Activated CD4-positive, alpha-beta memory T cell treated with anti-CD3 and anti-CD28 coated beads for 36 hours (primary cell): ENCODE measurements at regions of chr2 and their contacts with region 1.

Region 1: DNA sequence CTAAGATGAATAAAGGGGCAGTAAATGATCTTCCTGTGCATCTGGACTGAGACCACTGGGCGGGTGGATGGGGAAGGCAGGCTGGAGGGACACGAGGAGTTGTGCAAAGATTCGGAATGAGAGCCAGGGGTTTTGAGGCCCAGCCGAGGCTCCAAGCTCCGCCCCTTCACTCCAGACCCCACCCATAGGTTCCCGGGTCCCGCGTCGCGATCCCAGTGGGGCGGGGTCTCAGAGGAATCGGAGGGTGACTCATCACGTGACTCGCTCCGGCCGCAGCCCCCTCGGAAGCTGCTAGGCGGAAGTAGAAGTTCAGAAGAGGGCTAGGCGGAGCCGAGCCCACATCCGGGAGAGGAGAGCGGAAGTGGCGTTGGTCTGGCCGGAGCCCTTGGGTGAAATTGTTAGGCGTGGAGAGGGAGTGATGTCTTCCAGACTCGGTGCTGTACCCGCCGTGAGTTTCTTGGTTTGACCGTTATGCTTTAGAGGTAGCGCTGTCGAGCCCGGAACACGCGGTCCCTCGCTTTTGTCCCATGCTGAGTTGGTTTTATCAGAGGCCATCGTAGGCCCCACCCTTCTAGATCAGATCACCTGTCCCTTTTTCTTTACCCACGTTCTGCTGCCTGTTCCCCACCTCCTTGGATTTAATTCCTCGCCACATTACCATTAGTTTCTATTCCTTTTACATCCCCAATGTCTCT is at the start of gene ZNF512:
- DNase-seq: peak; percentile 91
- H3K4me3 Mint-ChIP-seq: peak within 1 kb of the TSS; percentile 94
- H3K27ac Mint-ChIP-seq: peak within 1 kb of the TSS; percentile 79
- H3K4me1 Mint-ChIP-seq: peaks cover 43% of the 10 kb centered on the region
- H3K27me3 Mint-ChIP-seq: no peaks in the 10 kb centered on the region
- total RNA-seq, gene ZNF512: 27.4 to 30.0 TPM

Region 2: GRCh38 chr2:27032495-27033252 is 550.2 kb before region 1 on chr2 and contains the start of gene TMEM214:
- CTCF ChIA-PET with region 1: no interaction called
- POLR2A ChIA-PET with region 1: no interaction called
- intact Hi-C with region 1: loop called (anchors 2 kb)
- DNase-seq: peak; percentile 89
- H3K4me3 Mint-ChIP-seq: peak within 1 kb of the TSS; percentile 93
- H3K27ac Mint-ChIP-seq: peak within 1 kb of the TSS; percentile 78
- H3K4me1 Mint-ChIP-seq: peaks cover 40% of the 10 kb centered on the region
- H3K27me3 Mint-ChIP-seq: no peaks in the 10 kb centered on the region
- total RNA-seq, gene TMEM214: 52.4 to 60.1 TPM

Region 3: DNA sequence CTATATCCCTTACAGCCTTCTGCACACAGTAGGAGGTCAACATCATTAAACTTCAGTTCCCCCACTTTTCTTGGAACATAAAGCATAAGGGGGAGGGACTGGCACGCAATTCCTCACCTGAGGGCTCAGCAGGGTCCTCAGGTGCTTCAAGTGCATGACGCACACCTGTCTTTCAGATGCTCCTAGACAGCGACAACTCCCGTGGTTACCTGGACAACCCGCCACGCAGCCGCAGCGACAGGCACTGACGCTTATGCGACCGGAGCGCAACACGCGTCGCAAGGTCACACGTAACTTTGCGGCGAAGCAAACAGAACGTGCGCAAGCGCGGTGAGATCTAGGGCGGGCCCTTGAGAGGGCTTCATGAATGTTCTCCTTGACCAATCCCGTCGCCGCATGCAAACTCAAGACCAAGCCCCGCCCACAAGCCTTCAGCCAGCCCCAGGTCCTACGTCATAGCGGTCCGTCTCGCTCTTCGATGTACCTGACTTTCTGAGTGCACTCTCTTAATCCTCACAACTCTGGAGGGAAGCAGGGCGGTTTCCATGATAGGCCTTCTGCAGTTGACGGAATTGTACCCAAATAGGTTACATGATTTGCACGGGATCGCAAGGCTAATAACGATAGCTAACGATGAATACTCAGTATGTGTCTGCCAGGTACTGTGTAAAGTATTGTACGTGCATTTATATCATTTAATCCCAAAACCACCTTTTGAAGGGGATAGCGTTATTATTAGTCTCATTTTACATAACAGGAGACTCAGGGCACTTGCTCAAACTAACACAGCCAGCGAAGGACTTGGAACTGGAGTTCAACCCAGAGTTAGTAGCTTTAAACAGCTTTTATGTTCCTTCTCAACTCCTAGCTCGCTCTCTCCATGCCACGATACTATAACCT is 93.1 kb before region 1 on chr2 and contains the start of gene IFT172:
- CTCF ChIA-PET with region 1: no interaction called
- POLR2A ChIA-PET with region 1: no interaction called
- intact Hi-C with region 1: loop called (anchors 1 kb)
- DNase-seq: peak; percentile 100
- H3K4me3 Mint-ChIP-seq: peak within 1 kb of the TSS; percentile 88
- H3K27ac Mint-ChIP-seq: peak within 1 kb of the TSS; percentile 76
- H3K4me1 Mint-ChIP-seq: peaks cover 31% of the 10 kb centered on the region
- H3K27me3 Mint-ChIP-seq: peaks cover 14% of the 10 kb centered on the region
- total RNA-seq, gene IFT172: 7.7 to 8.2 TPM

Region 4: DNA sequence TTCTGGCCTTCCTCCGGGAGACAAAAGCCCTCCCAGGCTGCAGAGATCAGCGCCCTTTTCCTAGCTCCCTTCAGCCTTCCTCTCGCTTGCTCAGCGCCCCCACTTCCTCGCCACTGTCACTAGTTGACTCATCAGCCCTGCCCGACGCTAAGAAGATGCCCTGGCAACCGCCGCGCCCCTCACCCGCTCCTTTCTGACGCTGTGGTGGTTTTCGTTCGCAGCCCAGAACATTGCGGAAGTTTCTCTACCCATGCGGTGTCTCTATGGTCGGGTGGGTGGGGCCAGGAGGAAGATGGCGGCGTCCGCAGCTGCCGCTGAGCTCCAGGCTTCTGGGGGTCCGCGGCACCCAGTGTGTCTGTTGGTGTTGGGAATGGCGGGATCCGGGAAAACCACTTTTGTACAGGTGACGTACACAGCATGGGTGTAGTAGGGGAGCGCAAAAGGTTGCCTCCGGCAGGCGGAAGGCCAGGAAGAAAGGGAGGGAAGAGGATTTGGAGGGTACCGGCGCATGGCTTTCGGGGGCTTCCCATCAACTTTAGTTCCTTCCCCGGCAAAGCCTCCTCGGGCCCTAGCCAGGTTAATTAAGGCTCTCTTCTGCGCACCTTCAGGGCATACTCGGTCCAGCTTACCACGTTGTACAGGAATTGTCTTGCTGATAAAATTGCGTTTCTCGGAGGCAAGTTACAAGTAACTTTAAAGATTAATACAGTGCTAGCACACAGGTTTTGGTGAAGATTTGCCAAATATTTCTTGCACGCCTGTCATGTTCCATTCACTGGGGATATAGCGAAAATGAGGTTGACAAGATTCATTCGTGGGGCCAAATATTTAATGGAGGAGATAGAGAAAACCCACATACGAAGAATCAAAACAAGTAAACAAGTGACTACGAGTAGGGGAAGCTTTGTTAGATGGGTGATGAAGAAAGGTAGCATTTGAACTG is 46.2 kb after region 1 on chr2 and contains the starts of genes CCDC121 and GPN1:
- CTCF ChIA-PET with region 1: interaction called, 4 read pairs
- POLR2A ChIA-PET with region 1: interaction called, 4 read pairs
- intact Hi-C with region 1: loop called (anchors 2 kb)
- DNase-seq: peak; percentile 98
- H3K4me3 Mint-ChIP-seq: no peak within 1 kb of the TSS
- H3K27ac Mint-ChIP-seq: no peak within 1 kb of the TSS
- H3K4me1 Mint-ChIP-seq: peaks cover 35% of the 10 kb centered on the region
- H3K27me3 Mint-ChIP-seq: no peaks in the 10 kb centered on the region
- total RNA-seq, gene CCDC121: 0.34 to 0.36 TPM
- total RNA-seq, gene GPN1: 54.4 to 56.8 TPM

Region 5: GRCh38 chr2:27638037-27638637 is 55.3 kb after region 1 on chr2:
- CTCF ChIA-PET with region 1: no interaction called
- POLR2A ChIA-PET with region 1: interaction called, 4 read pairs
- intact Hi-C with region 1: loop called (anchors 1 kb)
- DNase-seq: no peak
- H3K4me3 Mint-ChIP-seq: peak overlapping the region; percentile 33
- H3K27ac Mint-ChIP-seq: peak overlapping the region; percentile 99
- H3K4me1 Mint-ChIP-seq: peaks cover 35% of the 10 kb centered on the region
- H3K27me3 Mint-ChIP-seq: no peaks in the 10 kb centered on the region

Region 6: DNA sequence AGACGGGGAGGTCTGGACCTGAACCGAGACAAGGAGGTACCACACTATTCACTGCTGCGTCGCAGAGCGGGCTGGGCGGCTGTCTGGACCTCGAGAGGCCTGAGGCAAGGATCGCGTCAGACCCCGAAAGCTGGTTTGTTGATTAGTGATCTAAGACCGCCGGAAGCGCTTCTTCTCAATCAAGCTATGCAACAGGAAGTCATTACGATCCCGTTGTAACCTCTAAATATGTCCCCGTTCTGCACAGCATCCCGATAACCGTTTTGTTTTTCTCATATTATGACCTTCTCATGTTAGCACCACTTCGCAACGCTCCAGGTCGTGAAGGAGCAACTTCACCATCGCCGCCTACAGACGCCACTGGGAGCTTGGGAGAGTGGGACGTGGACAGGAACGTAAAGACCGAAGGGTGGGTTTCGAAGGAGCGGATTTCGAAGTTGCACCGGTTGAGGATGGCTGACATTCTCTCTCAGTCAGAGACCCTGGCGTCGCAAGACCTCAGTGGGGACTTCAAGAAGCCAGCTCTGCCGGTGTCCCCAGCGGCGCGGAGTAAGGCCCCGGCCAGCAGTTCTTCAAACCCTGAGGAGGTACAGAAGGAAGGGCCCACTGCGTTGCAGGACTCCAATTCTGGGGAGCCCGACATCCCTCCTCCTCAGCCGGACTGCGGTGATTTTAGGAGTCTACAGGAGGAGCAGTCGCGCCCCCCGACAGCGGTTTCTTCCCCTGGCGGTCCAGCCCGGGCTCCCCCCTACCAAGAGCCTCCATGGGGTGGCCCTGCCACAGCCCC is 80.8 kb after region 1 on chr2 and contains the starts of genes SLC4A1AP and SUPT7L:
- CTCF ChIA-PET with region 1: no interaction called
- POLR2A ChIA-PET with region 1: no interaction called
- intact Hi-C with region 1: loop called (anchors 10 kb)
- DNase-seq: peak; percentile 81
- H3K4me3 Mint-ChIP-seq: peak within 1 kb of the TSS; percentile 99
- H3K27ac Mint-ChIP-seq: peak within 1 kb of the TSS; percentile 100
- H3K4me1 Mint-ChIP-seq: peaks cover 50% of the 10 kb centered on the region
- H3K27me3 Mint-ChIP-seq: no peaks in the 10 kb centered on the region
- total RNA-seq, gene SLC4A1AP: 26.5 TPM
- total RNA-seq, gene SUPT7L: 30.1 to 30.3 TPM